ENCODE measurements at regions of chr17 and their contacts with region 1.

Region 1: GRCh38 chr17:55735731-55736405 is 13.2 kb upstream of the TMEM100 start:
- DNase-seq: peak; percentile 61
- ATAC-seq: peak; percentile 49
- H3K4me3 Mint-ChIP-seq: no peak overlapping the region
- H3K27ac Mint-ChIP-seq: no peak overlapping the region
- H3K4me1 Mint-ChIP-seq: peaks cover 4% of the 10 kb centered on the region
- H3K27me3 Mint-ChIP-seq: peaks cover 13% of the 10 kb centered on the region

Region 2: GRCh38 chr17:55641676-55642081 is 94.2 kb before region 1 on chr17:
- CTCF ChIA-PET with region 1: no interaction called
- POLR2A ChIA-PET with region 1: no interaction called
- DNase-seq: peak; percentile 36
- ATAC-seq: no peak
- H3K4me3 Mint-ChIP-seq: no peak overlapping the region
- H3K27ac Mint-ChIP-seq: no peak overlapping the region
- H3K4me1 Mint-ChIP-seq: peaks cover 9% of the 10 kb centered on the region
- H3K27me3 Mint-ChIP-seq: peaks cover 3% of the 10 kb centered on the region

Region 3: DNA sequence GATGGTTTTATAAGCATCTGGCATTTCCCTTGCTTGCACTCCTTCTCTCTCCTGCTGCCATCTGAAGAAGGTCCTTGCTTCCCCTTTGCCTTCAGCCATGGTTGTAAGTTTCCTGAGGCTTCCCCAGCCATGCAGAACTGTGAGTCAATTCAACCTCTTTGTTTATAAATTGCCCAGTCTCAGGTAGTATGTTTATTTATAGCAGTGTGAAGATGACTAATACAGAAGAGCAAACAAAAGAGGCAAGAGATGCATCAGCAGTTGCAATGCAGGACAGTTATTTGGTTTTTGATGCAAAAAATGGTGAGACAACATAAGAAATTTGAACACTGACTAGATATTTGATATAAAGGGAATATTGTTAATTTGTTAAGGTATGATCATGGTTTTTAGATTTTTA is 30.0 kb before region 1 on chr17:
- CTCF ChIA-PET with region 1: no interaction called
- POLR2A ChIA-PET with region 1: no interaction called
- DNase-seq: no peak
- ATAC-seq: no peak
- H3K4me3 Mint-ChIP-seq: no peak overlapping the region
- H3K27ac Mint-ChIP-seq: no peak overlapping the region
- H3K4me1 Mint-ChIP-seq: no peaks in the 10 kb centered on the region
- H3K27me3 Mint-ChIP-seq: peaks cover 18% of the 10 kb centered on the region

Region 4: DNA sequence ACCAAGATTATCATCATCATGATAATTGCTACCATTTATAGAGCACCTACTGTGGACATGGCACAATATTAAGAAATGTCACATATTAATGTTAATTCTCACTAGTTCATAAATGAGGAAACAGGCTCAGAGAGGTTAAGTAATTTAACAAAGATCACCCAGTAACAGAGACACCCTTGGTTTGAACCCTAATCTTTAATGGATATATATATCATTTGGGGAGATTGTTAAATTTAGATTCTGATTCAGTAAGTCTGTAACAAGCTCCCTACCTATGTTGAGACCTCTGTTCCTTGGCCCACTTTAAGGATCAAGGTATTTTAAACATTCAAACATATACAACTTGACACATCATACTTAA is 12.4 kb before region 1 on chr17:
- CTCF ChIA-PET with region 1: interaction called, 38 read pairs
- POLR2A ChIA-PET with region 1: no interaction called
- DNase-seq: no peak
- ATAC-seq: no peak
- H3K4me3 Mint-ChIP-seq: no peak overlapping the region
- H3K27ac Mint-ChIP-seq: no peak overlapping the region
- H3K4me1 Mint-ChIP-seq: no peaks in the 10 kb centered on the region
- H3K27me3 Mint-ChIP-seq: peaks cover 38% of the 10 kb centered on the region

Region 5: DNA sequence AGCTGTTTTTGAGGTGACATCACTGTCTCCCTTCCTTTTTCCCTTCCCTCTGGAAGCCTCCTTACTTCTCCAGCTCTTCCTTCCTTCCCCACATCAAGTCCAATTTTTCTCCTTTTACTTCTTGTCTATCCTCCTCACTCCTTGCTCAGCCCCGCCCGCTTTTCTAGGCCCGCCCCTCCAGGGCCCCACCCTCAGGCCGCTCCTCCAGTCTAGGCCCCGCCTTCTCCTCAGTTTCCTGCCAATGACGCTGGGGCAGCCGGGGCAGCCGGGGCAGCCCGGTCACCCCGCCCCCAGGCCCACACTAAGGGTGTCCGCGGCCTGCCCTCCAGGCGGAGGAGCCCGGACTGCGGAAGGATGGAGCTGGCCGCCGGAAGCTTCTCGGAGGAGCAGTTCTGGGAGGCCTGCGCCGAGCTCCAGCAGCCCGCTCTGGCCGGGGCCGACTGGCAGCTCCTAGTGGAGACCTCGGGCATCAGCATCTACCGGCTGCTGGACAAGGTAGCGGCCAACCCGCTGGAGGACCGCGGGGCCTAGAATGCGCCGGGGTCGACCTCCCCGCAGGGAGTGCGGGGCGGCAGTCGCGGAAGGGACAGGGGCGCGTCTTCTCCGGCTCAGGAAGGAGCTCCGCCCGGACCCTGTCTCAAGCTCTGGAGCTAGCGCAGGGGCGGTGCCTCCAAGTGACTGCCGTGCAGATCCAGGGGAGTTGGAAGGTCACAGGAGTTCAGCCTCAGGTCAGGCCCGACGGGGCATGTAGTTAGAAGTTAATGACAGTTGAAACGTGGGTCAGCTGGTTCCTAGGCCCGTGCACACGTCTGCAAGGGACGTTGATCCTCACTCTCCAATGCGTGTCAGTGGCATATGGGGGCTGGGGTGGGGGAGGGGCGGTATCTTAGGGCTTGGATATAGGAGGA is 15.1 kb after region 1 on chr17 and contains the start of gene PCTP:
- CTCF ChIA-PET with region 1: interaction called, 23 read pairs
- POLR2A ChIA-PET with region 1: no interaction called
- DNase-seq: peak; percentile 91
- ATAC-seq: peak; percentile 100
- H3K4me3 Mint-ChIP-seq: peak within 1 kb of the TSS; percentile 73
- H3K27ac Mint-ChIP-seq: peak within 1 kb of the TSS; percentile 48
- H3K4me1 Mint-ChIP-seq: peaks cover 17% of the 10 kb centered on the region
- H3K27me3 Mint-ChIP-seq: peaks cover 22% of the 10 kb centered on the region
- total RNA-seq, gene PCTP: 7.7 to 8.2 TPM

Measured in activated CD8-positive, alpha-beta T cell treated with anti-CD3 and anti-CD28 coated beads, Interleukin-2, amount 10 ng/mL, durations not matched to agents 7 days and 5 days (primary cell).